ENCODE measurements at regions of chr20 and their contacts with region 1.

Region 1: DNA sequence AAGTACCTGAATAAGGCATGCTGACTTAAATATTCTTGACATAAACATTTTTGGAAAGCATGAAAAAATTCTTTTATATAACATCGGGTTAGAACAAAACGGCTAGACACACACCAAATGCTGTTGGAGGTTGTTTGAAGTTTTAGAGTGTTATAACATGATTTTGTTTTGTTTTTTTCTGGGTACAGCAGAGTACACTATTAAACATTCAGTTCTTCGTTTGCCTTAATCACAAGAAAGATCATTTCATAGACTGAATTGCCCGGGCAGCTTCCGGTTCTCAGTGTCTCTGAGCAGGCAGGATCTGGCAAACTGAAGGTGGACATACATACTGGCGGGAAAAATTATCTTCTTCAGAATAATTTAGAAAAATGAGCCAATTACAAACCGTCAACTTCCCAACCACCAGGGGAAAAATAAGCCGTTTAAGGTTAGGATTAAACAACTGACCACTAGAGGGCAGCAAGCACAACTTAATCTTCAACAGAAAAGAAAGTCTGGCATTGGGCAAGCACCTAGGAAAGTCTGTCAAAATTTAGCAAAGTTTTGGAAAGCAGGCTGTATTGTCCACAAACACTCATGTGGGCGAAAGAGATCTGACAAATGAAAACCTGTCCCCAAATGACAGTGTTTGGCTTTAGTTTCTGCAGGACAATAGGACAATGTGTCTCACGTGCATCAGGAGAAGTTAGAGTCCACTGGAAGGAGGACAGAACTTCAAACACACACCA is 15.0 kb downstream of the ZNF217 start:
- DNase-seq: peak; percentile 77
- H3K4me3 ChIP-seq: peak overlapping the region in 1 of 2 experiments; percentile 52; a peak in 2 of 4 replicates
- H3K27ac ChIP-seq: peak overlapping the region; percentile 66 to 95
- H3K4me1 ChIP-seq: peaks cover 12 to 48% of the 10 kb centered on the region in 2 experiments
- H3K27me3 ChIP-seq: no peaks in the 10 kb centered on the region
- CTCF ChIP-seq: peak; percentile 90
- EP300 ChIP-seq: no peak
- RAD21 ChIP-seq: peak; percentile 90

Region 2: DNA sequence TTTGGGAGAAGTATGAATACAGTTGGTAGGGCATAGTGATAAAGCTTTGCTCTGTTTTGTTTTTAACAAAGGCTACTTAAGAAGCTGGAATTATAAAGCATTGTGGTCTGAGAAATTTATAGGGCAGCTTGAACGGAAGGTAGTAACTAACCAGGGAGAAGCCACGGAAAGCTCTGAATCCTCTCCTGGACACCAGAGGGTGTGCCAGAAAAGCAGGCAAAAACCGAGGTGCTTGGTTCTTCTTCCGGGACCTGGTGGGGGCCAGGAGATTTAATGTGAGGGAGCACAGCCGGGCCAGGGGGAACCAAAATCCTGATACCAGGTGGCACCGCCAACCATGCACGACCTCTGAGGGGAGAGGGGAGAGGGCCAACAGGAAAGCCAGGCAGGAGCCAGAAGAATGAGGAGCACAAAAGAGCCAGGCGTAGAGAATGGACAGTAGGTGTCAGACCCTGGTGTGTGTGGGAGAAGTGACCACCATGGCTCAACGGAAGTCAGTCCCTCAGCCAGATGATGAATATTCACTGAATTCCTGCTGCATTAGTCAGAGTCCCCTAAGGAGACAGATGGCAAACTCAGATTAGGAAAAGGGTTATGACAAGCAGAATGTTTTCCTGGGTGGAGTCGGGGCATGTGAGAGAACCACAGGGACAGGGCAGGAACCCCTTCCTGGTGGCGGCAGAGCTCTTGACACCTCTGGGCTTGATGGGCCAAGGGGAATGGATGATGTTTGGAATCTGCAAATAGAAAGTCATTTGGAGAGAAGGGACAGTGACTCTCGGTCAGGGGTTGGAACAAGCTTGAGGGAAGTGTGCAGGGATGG is 247.3 kb before region 1 on chr20:
- CTCF ChIA-PET with region 1: no interaction called
- POLR2A ChIA-PET with region 1: no interaction called
- DNase-seq: peak; percentile 15
- H3K4me3 ChIP-seq: no peak overlapping the region
- H3K27ac ChIP-seq: no peak overlapping the region
- H3K4me1 ChIP-seq: peaks cover 4 to 6% of the 10 kb centered on the region in 2 experiments; a peak in 2 of 4 replicates
- H3K27me3 ChIP-seq: no peaks in the 10 kb centered on the region
- CTCF ChIP-seq: no peak
- EP300 ChIP-seq: no peak
- RAD21 ChIP-seq: no peak

Region 3: DNA sequence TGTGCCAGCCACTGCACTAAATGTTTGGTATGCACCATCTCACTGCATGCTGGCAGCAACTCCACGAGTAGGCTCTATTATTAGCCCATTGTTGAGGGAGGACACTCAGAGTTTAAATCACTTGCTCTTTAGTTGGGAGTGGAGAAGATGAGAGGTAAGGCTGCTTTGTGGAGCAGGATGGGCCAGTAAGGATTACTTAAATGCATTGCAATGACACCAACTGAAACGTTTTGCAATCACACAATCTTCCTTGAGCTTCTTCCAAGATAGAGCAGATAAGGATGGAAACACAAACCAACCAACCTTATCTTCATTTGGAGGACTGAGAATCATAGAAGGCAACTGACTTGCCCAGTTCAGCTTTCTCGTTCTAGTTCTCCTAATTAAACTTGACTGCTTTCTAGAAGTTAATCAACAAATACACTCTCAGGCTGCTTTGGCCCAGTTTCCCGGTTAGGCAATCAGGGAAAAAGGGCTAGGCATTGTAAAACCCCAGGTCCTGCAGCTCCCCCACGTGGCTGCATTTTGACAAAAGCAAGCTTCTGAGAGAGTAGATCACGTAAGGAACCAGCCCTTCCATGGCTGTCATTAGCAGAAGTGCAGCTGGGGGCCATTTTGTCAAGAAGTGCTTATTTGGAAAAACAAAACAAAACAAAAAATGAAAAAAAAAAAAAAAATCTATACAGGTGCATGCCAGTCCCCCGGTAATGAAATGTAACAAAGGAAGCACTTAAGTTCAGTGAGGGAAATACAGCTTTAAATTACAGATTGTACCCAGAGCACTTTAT is 361.1 kb after region 1 on chr20:
- CTCF ChIA-PET with region 1: interaction called, 46 read pairs
- POLR2A ChIA-PET with region 1: no interaction called
- DNase-seq: peak; percentile 50
- H3K4me3 ChIP-seq: no peak overlapping the region
- H3K27ac ChIP-seq: peak overlapping the region; percentile 53 to 93
- H3K4me1 ChIP-seq: peaks cover 13 to 39% of the 10 kb centered on the region in 2 experiments
- H3K27me3 ChIP-seq: no peaks in the 10 kb centered on the region
- CTCF ChIP-seq: peak; percentile 88
- EP300 ChIP-seq: peak in 1 of 2 experiments; percentile 12; a peak in 1 of 4 replicates
- RAD21 ChIP-seq: peak; percentile 84

Region 4: DNA sequence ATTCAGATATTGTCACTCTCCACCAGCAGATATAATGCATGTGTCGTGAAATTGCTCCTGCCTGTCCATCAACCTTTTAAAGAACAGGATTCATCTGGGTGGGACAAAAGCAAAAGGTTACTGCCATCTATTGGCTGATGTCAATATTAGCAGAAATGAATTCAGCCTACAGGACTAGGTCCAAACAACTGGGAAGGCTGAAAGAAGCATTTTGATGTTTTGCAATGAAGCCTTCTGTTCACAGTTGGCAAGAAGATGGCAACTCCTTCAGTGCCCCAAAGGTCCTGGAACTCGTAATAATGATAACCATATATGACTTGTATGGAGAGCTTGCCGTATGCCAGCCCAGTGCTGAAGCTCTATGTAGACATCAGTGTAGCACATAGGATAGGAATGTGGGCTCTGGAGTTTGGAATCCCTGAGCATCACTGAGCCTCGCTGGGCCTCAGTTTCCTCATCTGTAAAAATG is 484.2 kb after region 1 on chr20:
- CTCF ChIA-PET with region 1: interaction called, 23 read pairs
- POLR2A ChIA-PET with region 1: no interaction called
- DNase-seq: peak; percentile 66
- H3K4me3 ChIP-seq: no peak overlapping the region; a peak in 1 of 4 replicates
- H3K27ac ChIP-seq: no peak overlapping the region
- H3K4me1 ChIP-seq: no peaks in the 10 kb centered on the region; a peak in 2 of 4 replicates
- H3K27me3 ChIP-seq: no peaks in the 10 kb centered on the region
- CTCF ChIP-seq: peak; percentile 67
- EP300 ChIP-seq: no peak
- RAD21 ChIP-seq: peak; percentile 90

Measured in SK-N-SH (cell line).